K562 (cell line): ENCODE measurements at regions of chr9 and their contacts with region 1.

Region 1: DNA sequence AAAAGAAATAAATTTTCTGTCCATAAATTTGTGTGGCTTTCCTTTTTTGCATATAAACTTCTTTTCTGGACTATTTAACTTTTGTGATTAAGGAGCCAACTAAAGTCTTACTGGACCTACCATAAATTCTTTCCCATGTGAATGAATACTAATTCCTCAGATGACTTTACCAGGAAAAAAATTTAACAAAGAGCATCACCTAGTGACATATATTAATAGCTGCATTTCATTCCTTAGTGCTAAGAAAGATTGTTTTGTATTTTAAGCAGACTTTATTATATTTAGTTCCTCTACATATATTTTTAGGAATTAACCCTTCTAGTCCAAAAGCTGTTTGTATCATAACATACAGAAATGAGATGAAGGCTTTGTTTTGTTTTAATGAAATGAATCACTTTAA is 64.4 kb downstream of the C9orf85 start:
- DNase-seq: no peak
- ATAC-seq: no peak
- H3K4me3 ChIP-seq: no peak overlapping the region
- H3K27ac ChIP-seq: no peak overlapping the region
- H3K4me1 ChIP-seq: no peaks in the 10 kb centered on the region
- H3K27me3 ChIP-seq: no peaks in the 10 kb centered on the region
- CTCF ChIP-seq: peak in 1 of 3 experiments; percentile 47; a peak in 2 of 6 replicates
- EP300 ChIP-seq: no peak
- POLR2A ChIP-seq: no peak
- RAD21 ChIP-seq: peak in 1 of 2 experiments; percentile 32; a peak in 2 of 4 replicates

Region 2: GRCh38 chr9:72022841-72023240 is 47.0 kb after region 1 on chr9:
- CTCF ChIA-PET with region 1: no interaction called
- POLR2A ChIA-PET with region 1: no interaction called
- in situ Hi-C with region 1: no loop called
- intact Hi-C with region 1: loop called (anchors 5 kb)
- DNase-seq: no peak
- ATAC-seq: no peak
- H3K4me3 ChIP-seq: no peak overlapping the region
- H3K27ac ChIP-seq: no peak overlapping the region
- H3K4me1 ChIP-seq: no peaks in the 10 kb centered on the region
- H3K27me3 ChIP-seq: no peaks in the 10 kb centered on the region; a peak in 2 of 5 replicates
- CTCF ChIP-seq: no peak
- EP300 ChIP-seq: no peak
- POLR2A ChIP-seq: no peak
- RAD21 ChIP-seq: no peak